HCT116 (cell line): ENCODE measurements at regions of chr22 and their contacts with region 1.

Region 1: DNA sequence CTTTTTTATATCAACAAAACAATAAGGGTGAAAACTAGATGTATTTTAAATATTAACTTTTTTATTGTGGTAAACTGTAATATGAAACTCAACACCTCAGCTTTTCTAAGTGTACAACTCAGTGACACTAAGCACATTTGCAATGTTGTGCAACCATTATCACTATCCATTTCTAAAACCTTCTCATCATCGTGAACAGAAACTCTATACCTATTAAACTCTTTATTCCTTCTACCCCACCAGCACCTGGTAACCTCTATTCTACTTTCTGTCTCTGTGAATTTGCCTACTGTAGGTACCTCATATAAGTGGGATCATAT is 9.4 kb downstream of the HORMAD2 start:
- DNase-seq: no peak
- ATAC-seq: peak; percentile 21
- H3K4me3 ChIP-seq: no peak overlapping the region
- H3K27ac ChIP-seq: peak overlapping the region; percentile 36; the same call in 1 of the 2 replicates
- H3K4me1 ChIP-seq: peaks cover 5 to 13% of the 10 kb centered on the region in 2 experiments; a peak in 3 of 4 replicates
- H3K27me3 ChIP-seq: no peaks in the 10 kb centered on the region
- CTCF ChIP-seq: no peak
- POLR2A ChIP-seq: no peak
- RAD21 ChIP-seq: no peak

Region 2: GRCh38 chr22:29394931-29395581 is 694.6 kb before region 1 on chr22:
- CTCF ChIA-PET with region 1: interaction called, 6 read pairs
- POLR2A ChIA-PET with region 1: no interaction called
- RAD21 ChIA-PET with region 1: no interaction called
- intact Hi-C with region 1: loop called (anchors 1 kb)
- DNase-seq: peak; percentile 48
- ATAC-seq: peak; percentile 98
- H3K4me3 ChIP-seq: no peak overlapping the region
- H3K27ac ChIP-seq: no peak overlapping the region
- H3K4me1 ChIP-seq: peaks cover 8 to 20% of the 10 kb centered on the region in 2 experiments
- H3K27me3 ChIP-seq: no peaks in the 10 kb centered on the region
- CTCF ChIP-seq: peak; percentile 79 to 91 (median 90)
- POLR2A ChIP-seq: no peak
- RAD21 ChIP-seq: peak; percentile 89

Region 3: GRCh38 chr22:29625090-29625825 is 464.4 kb before region 1 on chr22:
- CTCF ChIA-PET with region 1: interaction called, 10 read pairs
- POLR2A ChIA-PET with region 1: no interaction called
- RAD21 ChIA-PET with region 1: no interaction called
- intact Hi-C with region 1: no loop called
- DNase-seq: no peak
- ATAC-seq: 0 out of 2 replicates have a peak, but pooled peaks have one; percentile 24
- H3K4me3 ChIP-seq: no peak overlapping the region
- H3K27ac ChIP-seq: no peak overlapping the region
- H3K4me1 ChIP-seq: peaks cover 57 to 75% of the 10 kb centered on the region in 2 experiments
- H3K27me3 ChIP-seq: no peaks in the 10 kb centered on the region
- CTCF ChIP-seq: peak; percentile 53 to 93 (median 89); a peak in 5 of 6 replicates
- POLR2A ChIP-seq: no peak
- RAD21 ChIP-seq: peak; percentile 59

Region 4: DNA sequence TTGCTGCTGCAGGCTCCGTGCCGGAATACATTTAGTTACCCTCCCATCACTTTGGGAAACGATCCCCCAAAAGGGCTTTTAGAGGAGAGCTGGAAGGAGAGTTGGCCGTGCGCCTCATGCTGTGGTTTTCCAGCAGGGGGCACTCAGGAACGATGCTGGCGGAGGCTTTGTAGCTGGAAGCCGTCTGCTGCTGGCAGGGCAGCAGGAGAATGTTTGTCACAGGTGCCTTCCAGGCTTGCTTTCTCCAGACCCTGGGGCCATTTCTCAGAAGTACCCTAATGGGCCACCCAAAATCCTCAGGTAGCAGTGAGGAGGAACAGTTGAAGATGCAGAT is 399.8 kb before region 1 on chr22:
- CTCF ChIA-PET with region 1: interaction called, 19 read pairs
- POLR2A ChIA-PET with region 1: no interaction called
- RAD21 ChIA-PET with region 1: interaction called in 1 of 2 experiments, 3 read pairs
- intact Hi-C with region 1: loop called (anchors 1 kb)
- DNase-seq: no peak
- ATAC-seq: peak; percentile 74
- H3K4me3 ChIP-seq: no peak overlapping the region
- H3K27ac ChIP-seq: no peak overlapping the region
- H3K4me1 ChIP-seq: no peaks in the 10 kb centered on the region
- H3K27me3 ChIP-seq: no peaks in the 10 kb centered on the region
- CTCF ChIP-seq: peak; percentile 56 to 73 (median 71); a peak in 5 of 6 replicates
- POLR2A ChIP-seq: no peak
- RAD21 ChIP-seq: peak; percentile 64

Region 5: GRCh38 chr22:29772170-29772641 is 317.4 kb before region 1 on chr22:
- CTCF ChIA-PET with region 1: interaction called, 8 read pairs
- POLR2A ChIA-PET with region 1: no interaction called
- RAD21 ChIA-PET with region 1: interaction called, 3 to 4 read pairs
- intact Hi-C with region 1: loop called (anchors 2 kb)
- DNase-seq: peak; percentile 24
- ATAC-seq: peak; percentile 70
- H3K4me3 ChIP-seq: no peak overlapping the region
- H3K27ac ChIP-seq: peak overlapping the region; percentile 73; the same call in 1 of the 2 replicates
- H3K4me1 ChIP-seq: peaks cover 14 to 44% of the 10 kb centered on the region in 2 experiments
- H3K27me3 ChIP-seq: no peaks in the 10 kb centered on the region
- CTCF ChIP-seq: peak in 2 of 3 experiments; percentile 70 to 72; a peak in 5 of 6 replicates
- POLR2A ChIP-seq: no peak
- RAD21 ChIP-seq: peak; percentile 60

Region 6: GRCh38 chr22:30062950-30063349 is 26.7 kb before region 1 on chr22:
- CTCF ChIA-PET with region 1: no interaction called
- POLR2A ChIA-PET with region 1: no interaction called
- RAD21 ChIA-PET with region 1: no interaction called
- intact Hi-C with region 1: no loop called
- DNase-seq: no peak
- ATAC-seq: no peak
- H3K4me3 ChIP-seq: no peak overlapping the region
- H3K27ac ChIP-seq: no peak overlapping the region
- H3K4me1 ChIP-seq: no peaks in the 10 kb centered on the region
- H3K27me3 ChIP-seq: no peaks in the 10 kb centered on the region
- CTCF ChIP-seq: no peak
- POLR2A ChIP-seq: no peak
- RAD21 ChIP-seq: no peak

Region 7: GRCh38 chr22:30253205-30253852 is 163.7 kb after region 1 on chr22:
- CTCF ChIA-PET with region 1: interaction called, 3 read pairs
- POLR2A ChIA-PET with region 1: interaction called, 3 read pairs
- RAD21 ChIA-PET with region 1: interaction called, 4 to 5 read pairs
- intact Hi-C with region 1: loop called (anchors 1 kb)
- DNase-seq: no peak
- ATAC-seq: peak; percentile 21
- H3K4me3 ChIP-seq: peak overlapping the region; percentile 17 to 42
- H3K27ac ChIP-seq: peak overlapping the region; percentile 90
- H3K4me1 ChIP-seq: peaks cover 69 to 100% of the 10 kb centered on the region in 2 experiments
- H3K27me3 ChIP-seq: no peaks in the 10 kb centered on the region
- CTCF ChIP-seq: no peak
- POLR2A ChIP-seq: no peak
- RAD21 ChIP-seq: no peak